ENCODE measurements at regions of chr15 and their contacts with region 1.

Region 1: DNA sequence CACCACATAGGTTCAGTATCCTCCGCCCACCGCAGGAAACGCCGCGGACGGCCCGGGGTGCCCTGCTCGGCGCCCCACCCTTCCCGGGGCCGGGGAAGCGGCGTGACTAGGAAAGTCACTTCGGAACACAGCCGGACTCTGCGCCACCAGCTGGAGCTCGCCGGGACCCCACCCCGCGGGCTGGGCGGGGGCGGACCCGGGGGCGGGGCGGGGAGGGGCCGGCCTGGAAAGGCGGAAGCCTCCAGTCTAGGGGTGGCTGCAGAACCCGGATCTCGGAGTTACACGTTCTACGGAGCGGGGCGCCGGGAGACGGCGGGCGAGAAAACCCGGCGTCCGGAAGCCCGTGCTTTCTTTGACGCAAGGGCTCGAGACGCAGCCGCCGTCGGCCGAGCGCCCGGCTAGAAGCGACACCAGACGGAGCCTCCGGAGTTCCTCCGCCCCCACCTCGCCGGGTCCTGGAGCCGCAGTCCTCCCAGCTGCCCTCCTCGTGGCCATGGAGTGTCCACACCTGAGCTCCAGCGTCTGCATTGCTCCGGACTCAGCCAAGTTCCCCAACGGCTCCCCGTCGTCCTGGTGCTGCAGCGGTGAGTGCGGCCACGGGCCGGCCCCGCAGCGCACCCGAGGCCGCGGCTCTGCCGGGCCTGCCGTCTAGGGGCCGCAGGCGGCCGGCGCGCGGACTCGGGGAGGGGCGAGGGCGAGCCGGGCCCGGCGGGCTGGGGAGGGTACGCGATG is at the start of gene USP3:
- DNase-seq: peak; percentile 92 to 95 (median 94)
- H3K4me3 ChIP-seq: peak within 1 kb of the TSS; percentile 63 to 83
- H3K4me3 Mint-ChIP-seq: peak within 1 kb of the TSS; percentile 90 to 98 (median 97)
- H3K27ac ChIP-seq: peak within 1 kb of the TSS; percentile 98
- H3K27ac Mint-ChIP-seq: peak within 1 kb of the TSS; percentile 93 to 100 (median 99)
- H3K4me1 ChIP-seq: peaks cover 81% of the 10 kb centered on the region
- H3K4me1 Mint-ChIP-seq: peaks cover 61 to 84% (median 68%) of the 10 kb centered on the region in 4 donors
- H3K27me3 ChIP-seq: no peaks in the 10 kb centered on the region
- H3K27me3 Mint-ChIP-seq: no peaks in the 10 kb centered on the region
- total RNA-seq, gene USP3: 148 to 159 TPM

Region 2: DNA sequence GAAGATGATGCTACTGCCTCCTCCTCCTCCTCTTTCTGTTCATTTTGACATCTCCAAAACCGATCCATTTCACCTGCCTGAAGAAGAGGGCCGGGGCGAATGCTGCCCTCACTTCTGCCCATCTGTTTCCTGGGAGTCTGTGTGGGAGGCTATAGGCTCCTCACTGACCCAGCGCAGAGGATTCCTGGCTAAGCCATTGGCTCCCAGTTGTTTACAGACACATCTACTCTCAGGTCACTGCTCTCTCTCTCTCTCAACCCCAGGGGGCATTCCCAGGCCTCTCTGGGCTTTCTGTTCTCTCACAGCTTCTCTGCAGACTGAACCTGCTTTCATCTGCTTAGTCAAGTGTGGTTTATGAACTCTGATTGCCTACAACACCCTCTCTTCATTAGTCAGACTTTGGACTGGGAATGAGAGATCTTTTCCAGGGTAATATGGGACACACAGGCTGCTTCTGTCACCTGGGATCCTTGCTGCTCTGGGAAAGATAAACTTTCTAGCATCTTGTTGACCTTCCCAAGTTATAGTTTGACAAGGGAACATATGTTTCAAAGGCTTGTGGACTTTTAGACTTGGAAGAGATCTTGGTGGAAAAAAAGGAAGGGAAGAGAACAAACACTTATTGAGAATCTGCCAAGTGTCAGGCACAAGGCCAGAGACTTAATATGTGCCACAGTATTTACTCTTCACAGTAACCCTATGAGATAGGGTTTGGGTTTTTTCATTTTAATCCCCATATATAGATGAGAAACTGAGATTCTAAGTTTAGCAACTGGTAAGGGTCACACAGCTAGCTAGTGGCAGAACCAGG is 30.2 kb before region 1 on chr15:
- CTCF ChIA-PET with region 1: interaction called, 224 read pairs
- POLR2A ChIA-PET with region 1: interaction called, 906 read pairs
- intact Hi-C with region 1: loop called (anchors 1 kb)
- DNase-seq: peak in 4 of 5 donors; percentile 51 to 87 (median 60)
- H3K4me3 ChIP-seq: no peak overlapping the region
- H3K4me3 Mint-ChIP-seq: peak overlapping the region in 6 of 8 donors; percentile 62 to 86 (median 78)
- H3K27ac ChIP-seq: peak overlapping the region; percentile 43
- H3K27ac Mint-ChIP-seq: peak overlapping the region; percentile 87 to 99 (median 97)
- H3K4me1 ChIP-seq: peaks cover 59% of the 10 kb centered on the region
- H3K4me1 Mint-ChIP-seq: peaks cover 38 to 58% (median 54%) of the 10 kb centered on the region in 4 donors
- H3K27me3 ChIP-seq: no peaks in the 10 kb centered on the region
- H3K27me3 Mint-ChIP-seq: no peaks in the 10 kb centered on the region

Region 3: GRCh38 chr15:63514531-63514943 is 10.1 kb after region 1 on chr15:
- CTCF ChIA-PET with region 1: interaction called, 9 read pairs
- POLR2A ChIA-PET with region 1: interaction called, 23 read pairs
- intact Hi-C with region 1: no loop called
- DNase-seq: no peak
- H3K4me3 ChIP-seq: no peak overlapping the region
- H3K4me3 Mint-ChIP-seq: peak overlapping the region in 7 of 8 donors; percentile 33 to 84 (median 59)
- H3K27ac ChIP-seq: no peak overlapping the region
- H3K27ac Mint-ChIP-seq: peak overlapping the region; percentile 19 to 91 (median 70)
- H3K4me1 ChIP-seq: peaks cover 100% of the 10 kb centered on the region
- H3K4me1 Mint-ChIP-seq: peaks cover 67 to 97% (median 87%) of the 10 kb centered on the region in 4 donors
- H3K27me3 ChIP-seq: no peaks in the 10 kb centered on the region
- H3K27me3 Mint-ChIP-seq: no peaks in the 10 kb centered on the region

Region 4: DNA sequence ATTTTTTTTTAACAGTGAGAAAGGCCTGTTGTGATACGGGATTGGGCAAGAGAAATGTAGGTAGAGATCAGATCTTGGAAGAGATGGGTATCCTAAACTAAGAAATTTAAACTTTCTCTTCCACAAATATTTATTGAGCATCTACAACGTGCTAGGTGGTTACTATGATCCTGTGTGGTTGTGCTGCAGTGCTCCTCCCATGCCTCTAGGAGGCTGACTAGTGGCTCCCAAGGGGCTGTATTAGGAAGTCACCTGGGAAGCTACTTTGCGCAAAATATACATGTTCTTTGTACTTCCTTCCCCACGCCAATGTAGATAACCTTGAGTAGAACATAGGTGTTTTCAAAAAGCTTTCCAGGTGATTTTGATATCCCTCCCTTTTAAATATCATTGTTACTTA is 27.2 kb after region 1 on chr15:
- CTCF ChIA-PET with region 1: interaction called, 5 read pairs
- POLR2A ChIA-PET with region 1: interaction called, 20 read pairs
- intact Hi-C with region 1: no loop called
- DNase-seq: no peak
- H3K4me3 ChIP-seq: no peak overlapping the region
- H3K4me3 Mint-ChIP-seq: peak overlapping the region in 5 of 8 donors; percentile 21 to 59 (median 35)
- H3K27ac ChIP-seq: no peak overlapping the region
- H3K27ac Mint-ChIP-seq: peak overlapping the region in 5 of 7 donors; percentile 16 to 65 (median 25)
- H3K4me1 ChIP-seq: peaks cover 93% of the 10 kb centered on the region
- H3K4me1 Mint-ChIP-seq: peaks cover 70 to 95% (median 86%) of the 10 kb centered on the region in 4 donors
- H3K27me3 ChIP-seq: no peaks in the 10 kb centered on the region
- H3K27me3 Mint-ChIP-seq: no peaks in the 10 kb centered on the region

Region 5: DNA sequence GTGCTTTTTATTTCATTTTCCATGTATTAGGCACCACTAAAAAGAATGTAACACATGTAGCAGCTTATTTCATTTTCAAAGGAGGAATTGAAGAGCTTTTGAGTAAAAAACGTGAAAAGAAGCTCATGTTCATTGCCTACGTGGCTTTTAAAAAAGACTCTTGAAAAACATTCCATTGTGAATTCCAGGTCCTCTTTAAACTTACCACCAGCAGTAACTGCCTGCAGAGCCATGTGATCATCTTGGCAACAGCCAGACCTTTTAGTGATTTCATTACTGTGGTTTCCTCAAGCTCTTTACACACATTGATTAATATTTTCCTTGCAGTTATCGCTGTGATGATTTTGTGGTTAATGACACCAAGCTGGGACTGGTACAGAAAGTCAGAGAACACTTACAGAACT is 49.0 kb after region 1 on chr15:
- CTCF ChIA-PET with region 1: interaction called, 14 read pairs
- POLR2A ChIA-PET with region 1: interaction called, 17 read pairs
- intact Hi-C with region 1: no loop called
- DNase-seq: peak in 2 of 5 donors; percentile 9
- H3K4me3 ChIP-seq: no peak overlapping the region
- H3K4me3 Mint-ChIP-seq: peak overlapping the region in 2 of 8 donors; percentile 26 to 53
- H3K27ac ChIP-seq: peak overlapping the region; percentile 9
- H3K27ac Mint-ChIP-seq: peak overlapping the region in 6 of 7 donors; percentile 19 to 79 (median 54)
- H3K4me1 ChIP-seq: peaks cover 42% of the 10 kb centered on the region
- H3K4me1 Mint-ChIP-seq: peaks cover 34 to 60% (median 49%) of the 10 kb centered on the region in 4 donors
- H3K27me3 ChIP-seq: no peaks in the 10 kb centered on the region
- H3K27me3 Mint-ChIP-seq: no peaks in the 10 kb centered on the region

Region 6: GRCh38 chr15:64093627-64094417 is 589.4 kb after region 1 on chr15 and contains the start of gene CIAO2A:
- CTCF ChIA-PET with region 1: no interaction called
- POLR2A ChIA-PET with region 1: interaction called, 7 read pairs
- intact Hi-C with region 1: loop called (anchors 1 kb)
- DNase-seq: peak; percentile 86 to 96 (median 90)
- H3K4me3 ChIP-seq: peak within 1 kb of the TSS; percentile 87 to 98
- H3K4me3 Mint-ChIP-seq: peak within 1 kb of the TSS; percentile 92 to 99 (median 98)
- H3K27ac ChIP-seq: peak within 1 kb of the TSS; percentile 85
- H3K27ac Mint-ChIP-seq: peak within 1 kb of the TSS; percentile 90 to 100 (median 98)
- H3K4me1 ChIP-seq: peaks cover 65% of the 10 kb centered on the region
- H3K4me1 Mint-ChIP-seq: peaks cover 55 to 86% (median 69%) of the 10 kb centered on the region in 4 donors
- H3K27me3 ChIP-seq: no peaks in the 10 kb centered on the region
- H3K27me3 Mint-ChIP-seq: no peaks in the 10 kb centered on the region
- total RNA-seq, gene CIAO2A: 35.0 to 36.4 TPM

Measured in CD4-positive, alpha-beta memory T cell (primary cell).